Activated CD4-positive, alpha-beta T cell treated with anti-CD3 and anti-CD28 coated beads for 36 hours (primary cell): ENCODE measurements at regions of chr12 and their contacts with region 1.

Region 1: DNA sequence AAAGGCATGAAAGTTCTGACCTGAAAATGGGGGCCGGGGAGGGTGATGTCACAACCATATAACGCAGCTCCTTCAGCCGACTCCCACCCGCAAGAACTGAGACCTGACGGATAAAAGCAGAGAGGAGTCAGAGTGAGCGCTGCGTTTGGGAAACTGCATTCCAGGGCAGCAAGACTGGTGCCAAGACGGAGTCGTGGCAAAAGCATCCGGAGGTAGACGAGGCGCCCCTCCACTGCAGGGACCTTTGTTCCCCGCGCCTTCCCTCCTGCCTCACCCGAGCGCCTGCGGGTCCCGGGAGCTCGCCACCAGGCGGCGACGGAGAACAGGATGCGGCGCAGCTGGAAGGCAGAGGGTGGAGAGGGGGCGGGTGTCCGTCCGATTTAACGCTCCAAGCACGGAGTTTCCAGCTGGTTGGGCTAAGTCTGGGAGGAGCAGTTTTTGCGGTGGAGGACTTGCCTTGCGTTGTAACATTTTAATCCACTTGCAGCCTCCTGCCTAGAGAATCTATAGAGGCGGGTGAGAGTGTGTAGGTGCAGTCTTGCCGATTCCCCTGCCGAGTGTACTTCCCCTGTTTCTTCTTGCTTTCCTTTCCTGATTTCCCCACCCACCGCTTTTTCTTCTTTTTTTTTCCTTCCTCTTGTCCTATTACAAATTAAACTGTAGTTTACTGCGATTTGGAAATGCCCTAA is 1.2 kb upstream of the CPNE8 start:
- DNase-seq: peak; percentile 86
- ATAC-seq: peak; percentile 73
- H3K4me3 Mint-ChIP-seq: peak overlapping the region; percentile 84
- H3K27ac Mint-ChIP-seq: peak overlapping the region; percentile 89
- H3K4me1 Mint-ChIP-seq: peaks cover 30% of the 10 kb centered on the region
- H3K27me3 Mint-ChIP-seq: peaks cover 10% of the 10 kb centered on the region

Region 2: GRCh38 chr12:38316391-38317129 is 590.1 kb before region 1 on chr12 and contains the start of gene ALG10B:
- CTCF ChIA-PET with region 1: no interaction called
- POLR2A ChIA-PET with region 1: no interaction called
- intact Hi-C with region 1: loop called in 1 of 2 experiments (anchors 1 kb)
- DNase-seq: peak; percentile 94
- ATAC-seq: peak; percentile 100
- H3K4me3 Mint-ChIP-seq: peak within 1 kb of the TSS; percentile 89
- H3K27ac Mint-ChIP-seq: peak within 1 kb of the TSS; percentile 95
- H3K4me1 Mint-ChIP-seq: peaks cover 20% of the 10 kb centered on the region
- H3K27me3 Mint-ChIP-seq: no peaks in the 10 kb centered on the region
- total RNA-seq, gene ALG10B: 14.2 to 15.3 TPM

Region 3: GRCh38 chr12:38771871-38772270 is 134.8 kb before region 1 on chr12:
- CTCF ChIA-PET with region 1: no interaction called
- POLR2A ChIA-PET with region 1: interaction called, 4 read pairs
- intact Hi-C with region 1: loop called (anchors 5 to 10 kb)
- DNase-seq: peak; percentile 52
- ATAC-seq: peak; percentile 85
- H3K4me3 Mint-ChIP-seq: no peak overlapping the region
- H3K27ac Mint-ChIP-seq: no peak overlapping the region
- H3K4me1 Mint-ChIP-seq: peaks cover 13% of the 10 kb centered on the region
- H3K27me3 Mint-ChIP-seq: no peaks in the 10 kb centered on the region

Region 4: GRCh38 chr12:38934686-38935085 is 28.1 kb after region 1 on chr12:
- CTCF ChIA-PET with region 1: interaction called, 4 read pairs
- POLR2A ChIA-PET with region 1: no interaction called
- intact Hi-C with region 1: loop called in 1 of 2 experiments (anchors 2 kb)
- DNase-seq: no peak
- ATAC-seq: no peak
- H3K4me3 Mint-ChIP-seq: no peak overlapping the region
- H3K27ac Mint-ChIP-seq: no peak overlapping the region
- H3K4me1 Mint-ChIP-seq: peaks cover 3% of the 10 kb centered on the region
- H3K27me3 Mint-ChIP-seq: no peaks in the 10 kb centered on the region

Region 5: DNA sequence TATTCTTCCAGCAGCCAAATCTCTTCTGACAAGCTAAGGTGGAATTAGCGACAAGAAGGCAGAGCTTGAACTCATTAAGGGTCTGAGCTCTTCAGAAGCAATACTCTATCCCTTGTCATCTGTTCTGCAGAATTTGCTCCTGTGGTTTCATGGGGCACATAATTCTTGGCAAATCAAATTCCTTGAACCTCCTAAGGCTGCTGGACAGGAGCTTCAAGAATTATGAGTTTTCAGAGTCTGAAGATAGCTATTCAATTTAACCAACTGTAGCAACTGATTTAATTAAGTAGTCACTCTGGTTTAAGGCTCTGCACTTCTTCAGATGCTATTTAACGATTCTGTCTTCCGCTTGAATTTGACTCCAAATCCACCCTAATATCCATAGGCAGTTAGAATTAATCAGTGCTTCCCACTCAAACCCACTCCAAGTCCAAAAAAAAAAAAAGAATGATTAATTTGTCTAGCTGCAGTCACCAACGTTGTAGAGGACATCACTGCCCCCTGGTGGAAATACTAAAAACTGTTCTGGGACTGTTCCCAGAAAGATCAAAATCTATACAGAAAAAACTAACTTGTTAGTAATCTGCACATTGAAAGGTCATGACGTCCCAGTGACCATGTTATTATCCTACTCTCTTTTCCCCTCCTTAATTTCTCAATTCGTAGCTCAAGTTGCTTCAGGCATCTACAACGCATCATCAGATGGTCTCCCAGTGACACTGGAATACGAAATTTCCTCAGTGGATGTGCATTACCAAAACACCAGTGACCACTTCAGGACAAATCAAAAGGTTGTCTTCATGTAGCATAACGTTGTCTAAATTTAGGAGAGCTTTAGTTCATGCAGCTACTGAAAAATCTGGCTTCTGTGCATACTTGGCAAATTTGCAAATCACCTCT is 366.5 kb after region 1 on chr12:
- CTCF ChIA-PET with region 1: interaction called, 6 read pairs
- POLR2A ChIA-PET with region 1: no interaction called
- intact Hi-C with region 1: loop called in 1 of 2 experiments (anchors 10 kb)
- DNase-seq: peak; percentile 38
- ATAC-seq: no peak
- H3K4me3 Mint-ChIP-seq: no peak overlapping the region
- H3K27ac Mint-ChIP-seq: no peak overlapping the region
- H3K4me1 Mint-ChIP-seq: peaks cover 5% of the 10 kb centered on the region
- H3K27me3 Mint-ChIP-seq: peaks cover 15% of the 10 kb centered on the region

Region 6: GRCh38 chr12:39300799-39301198 is 394.2 kb after region 1 on chr12:
- CTCF ChIA-PET with region 1: no interaction called
- POLR2A ChIA-PET with region 1: no interaction called
- intact Hi-C with region 1: no loop called
- DNase-seq: no peak
- ATAC-seq: no peak
- H3K4me3 Mint-ChIP-seq: no peak overlapping the region
- H3K27ac Mint-ChIP-seq: no peak overlapping the region
- H3K4me1 Mint-ChIP-seq: no peaks in the 10 kb centered on the region
- H3K27me3 Mint-ChIP-seq: no peaks in the 10 kb centered on the region

Region 7: GRCh38 chr12:40107098-40107802 is 1200.6 kb after region 1 on chr12:
- CTCF ChIA-PET with region 1: no interaction called
- POLR2A ChIA-PET with region 1: no interaction called
- intact Hi-C with region 1: loop called in 1 of 2 experiments (anchors 10 kb)
- DNase-seq: peak; percentile 93
- ATAC-seq: peak; percentile 37
- H3K4me3 Mint-ChIP-seq: peak overlapping the region; percentile 45
- H3K27ac Mint-ChIP-seq: no peak overlapping the region
- H3K4me1 Mint-ChIP-seq: peaks cover 42% of the 10 kb centered on the region
- H3K27me3 Mint-ChIP-seq: peaks cover 24% of the 10 kb centered on the region